Prostate gland (tissue), 2 donors: ENCODE measurements at regions of chr9 and their contacts with region 1.

Region 1: GRCh38 chr9:72526901-72527800 is 5.7 kb downstream of the TMC1 start:
- DNase-seq: peak; percentile 79
- H3K4me3 ChIP-seq: peak overlapping the region in 1 of 2 donors; percentile 11
- H3K27ac ChIP-seq: peak overlapping the region; percentile 71 to 76
- H3K4me1 ChIP-seq: peaks cover 5% of the 10 kb centered on the region
- H3K27me3 ChIP-seq: no peaks in the 10 kb centered on the region
- CTCF ChIP-seq: no peak
- POLR2A ChIP-seq: peak; percentile 46

Region 2: GRCh38 chr9:72462340-72462739 is 64.8 kb before region 1 on chr9:
- intact Hi-C with region 1: no loop called
- DNase-seq: no peak
- H3K4me3 ChIP-seq: no peak overlapping the region
- H3K27ac ChIP-seq: no peak overlapping the region
- H3K4me1 ChIP-seq: no peaks in the 10 kb centered on the region
- H3K27me3 ChIP-seq: no peaks in the 10 kb centered on the region
- CTCF ChIP-seq: no peak
- POLR2A ChIP-seq: no peak

Region 3: GRCh38 chr9:72473474-72474261 is 53.5 kb before region 1 on chr9:
- intact Hi-C with region 1: loop called (anchors 10 kb)
- DNase-seq: no peak
- H3K4me3 ChIP-seq: no peak overlapping the region
- H3K27ac ChIP-seq: no peak overlapping the region
- H3K4me1 ChIP-seq: no peaks in the 10 kb centered on the region
- H3K27me3 ChIP-seq: no peaks in the 10 kb centered on the region
- CTCF ChIP-seq: no peak
- POLR2A ChIP-seq: no peak

Region 4: GRCh38 chr9:72485821-72486593 is 41.1 kb before region 1 on chr9:
- intact Hi-C with region 1: no loop called
- DNase-seq: no peak
- H3K4me3 ChIP-seq: no peak overlapping the region
- H3K27ac ChIP-seq: no peak overlapping the region
- H3K4me1 ChIP-seq: no peaks in the 10 kb centered on the region
- H3K27me3 ChIP-seq: no peaks in the 10 kb centered on the region
- CTCF ChIP-seq: no peak
- POLR2A ChIP-seq: no peak

Region 5: GRCh38 chr9:72586388-72587130 is 59.4 kb after region 1 on chr9:
- intact Hi-C with region 1: loop called (anchors 10 kb)
- DNase-seq: no peak
- H3K4me3 ChIP-seq: no peak overlapping the region
- H3K27ac ChIP-seq: no peak overlapping the region
- H3K4me1 ChIP-seq: no peaks in the 10 kb centered on the region
- H3K27me3 ChIP-seq: no peaks in the 10 kb centered on the region
- CTCF ChIP-seq: no peak
- POLR2A ChIP-seq: no peak